Breast epithelium (tissue), 4 donors: ENCODE measurements at regions of chr11 and their contacts with region 1.

Region 1: DNA sequence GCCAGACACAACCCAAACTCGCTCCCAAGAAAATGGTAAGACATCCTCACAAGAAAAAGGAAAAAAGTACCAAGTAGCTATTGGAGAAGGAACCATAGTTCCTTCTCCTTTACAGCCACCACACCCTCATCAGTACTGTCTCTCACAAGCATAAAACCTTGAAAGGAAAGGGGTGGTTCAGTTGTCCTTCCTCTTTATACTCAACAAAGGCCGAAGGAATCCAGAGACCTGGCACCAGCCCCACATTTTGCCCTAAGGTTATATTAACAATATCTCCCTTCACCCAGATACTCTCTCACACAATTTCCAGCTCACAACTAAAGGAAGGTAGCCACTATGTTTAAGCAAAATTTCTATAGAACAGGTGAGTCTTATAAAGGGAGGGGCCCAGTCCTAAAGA is 8.5 kb downstream of the FHIP1B start:
- DNase-seq: no peak
- H3K4me3 ChIP-seq: no peak overlapping the region
- H3K27ac ChIP-seq: peak overlapping the region; percentile 0 to 6
- H3K4me1 ChIP-seq: no peaks in the 10 kb centered on the region
- H3K27me3 ChIP-seq: no peaks in the 10 kb centered on the region
- CTCF ChIP-seq: no peak
- POLR2A ChIP-seq: no peak

Region 2: GRCh38 chr11:6203327-6203726 is 22.6 kb before region 1 on chr11:
- intact Hi-C with region 1: no loop called
- DNase-seq: no peak
- H3K4me3 ChIP-seq: no peak overlapping the region
- H3K27ac ChIP-seq: no peak overlapping the region
- H3K4me1 ChIP-seq: no peaks in the 10 kb centered on the region
- H3K27me3 ChIP-seq: no peaks in the 10 kb centered on the region
- CTCF ChIP-seq: no peak
- POLR2A ChIP-seq: no peak

Region 3: DNA sequence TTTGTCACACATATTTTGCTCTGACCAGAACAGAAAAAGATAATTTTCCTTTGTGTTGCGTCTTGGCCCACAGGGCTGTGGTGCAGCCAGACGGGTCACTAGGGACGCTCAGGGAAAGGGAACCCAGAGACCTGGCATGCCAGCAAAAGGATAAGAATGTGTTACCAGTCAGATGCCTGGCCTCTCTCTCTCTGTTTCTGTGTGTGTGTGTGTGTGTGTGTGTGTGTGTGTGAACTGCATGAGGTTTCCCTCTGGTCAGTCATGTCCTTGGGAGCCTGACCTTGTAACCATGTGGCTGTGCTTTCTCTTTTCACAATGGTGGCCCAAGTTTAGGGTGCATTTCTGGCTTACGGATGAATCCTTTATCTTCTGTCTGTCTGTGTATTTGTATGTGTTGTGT is 59.1 kb after region 1 on chr11:
- intact Hi-C with region 1: loop called (anchors 2 kb)
- DNase-seq: no peak
- H3K4me3 ChIP-seq: no peak overlapping the region
- H3K27ac ChIP-seq: no peak overlapping the region
- H3K4me1 ChIP-seq: no peaks in the 10 kb centered on the region
- H3K27me3 ChIP-seq: no peaks in the 10 kb centered on the region
- CTCF ChIP-seq: no peak
- POLR2A ChIP-seq: no peak